Adrenal gland (tissue), 19 donors: ENCODE measurements at regions of chr7 and their contacts with region 1.

Region 1: GRCh38 chr7:83410989-83411591 is 237.8 kb downstream of the SEMA3E start:
- DNase-seq: peak in 5 of 7 donors; percentile 15 to 49 (median 22)
- H3K4me3 ChIP-seq: no peak overlapping the region
- H3K27ac ChIP-seq: no peak overlapping the region
- H3K4me1 ChIP-seq: no peaks in the 10 kb centered on the region
- H3K27me3 ChIP-seq: no peaks in the 10 kb centered on the region
- CTCF ChIP-seq: peak; percentile 43 to 76 (median 58)
- POLR2A ChIP-seq: no peak

Region 2: DNA sequence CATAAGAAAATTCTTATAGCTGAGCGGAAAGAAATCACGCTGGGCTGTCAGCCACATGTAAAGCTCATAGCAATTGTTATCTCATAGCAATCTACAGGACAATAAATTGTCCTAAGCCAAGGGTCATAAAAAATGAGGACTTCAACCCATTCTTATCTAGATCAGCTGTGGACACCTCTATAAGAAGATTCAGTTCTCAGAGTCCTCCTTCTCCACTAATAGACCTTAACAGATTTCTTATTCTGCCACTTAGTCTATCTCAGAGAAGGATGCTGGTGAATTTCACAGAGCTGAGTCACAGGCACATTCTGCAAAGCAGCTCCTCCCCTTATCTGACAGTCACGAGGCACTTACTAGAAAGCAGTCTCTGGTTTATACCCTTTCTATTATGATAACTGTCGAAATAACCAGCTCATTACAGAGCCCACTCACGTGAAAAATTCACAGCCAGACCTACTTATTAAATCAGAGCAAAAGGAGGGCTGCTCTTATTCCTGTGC is 63.1 kb before region 1 on chr7:
- intact Hi-C with region 1: no loop called
- DNase-seq: no peak
- H3K4me3 ChIP-seq: no peak overlapping the region
- H3K27ac ChIP-seq: no peak overlapping the region
- H3K4me1 ChIP-seq: no peaks in the 10 kb centered on the region
- H3K27me3 ChIP-seq: no peaks in the 10 kb centered on the region
- CTCF ChIP-seq: no peak
- POLR2A ChIP-seq: no peak

Region 3: GRCh38 chr7:83649708-83650107 is 238.6 kb after region 1 on chr7:
- intact Hi-C with region 1: loop called in 1 of 2 experiments (anchors 5 kb)
- DNase-seq: no peak
- H3K4me3 ChIP-seq: no peak overlapping the region
- H3K27ac ChIP-seq: no peak overlapping the region
- H3K4me1 ChIP-seq: no peaks in the 10 kb centered on the region
- H3K27me3 ChIP-seq: peaks cover 3% of the 10 kb centered on the region
- CTCF ChIP-seq: no peak
- POLR2A ChIP-seq: no peak